ENCODE measurements at regions of chr16 and their contacts with region 1.

Region 1: DNA sequence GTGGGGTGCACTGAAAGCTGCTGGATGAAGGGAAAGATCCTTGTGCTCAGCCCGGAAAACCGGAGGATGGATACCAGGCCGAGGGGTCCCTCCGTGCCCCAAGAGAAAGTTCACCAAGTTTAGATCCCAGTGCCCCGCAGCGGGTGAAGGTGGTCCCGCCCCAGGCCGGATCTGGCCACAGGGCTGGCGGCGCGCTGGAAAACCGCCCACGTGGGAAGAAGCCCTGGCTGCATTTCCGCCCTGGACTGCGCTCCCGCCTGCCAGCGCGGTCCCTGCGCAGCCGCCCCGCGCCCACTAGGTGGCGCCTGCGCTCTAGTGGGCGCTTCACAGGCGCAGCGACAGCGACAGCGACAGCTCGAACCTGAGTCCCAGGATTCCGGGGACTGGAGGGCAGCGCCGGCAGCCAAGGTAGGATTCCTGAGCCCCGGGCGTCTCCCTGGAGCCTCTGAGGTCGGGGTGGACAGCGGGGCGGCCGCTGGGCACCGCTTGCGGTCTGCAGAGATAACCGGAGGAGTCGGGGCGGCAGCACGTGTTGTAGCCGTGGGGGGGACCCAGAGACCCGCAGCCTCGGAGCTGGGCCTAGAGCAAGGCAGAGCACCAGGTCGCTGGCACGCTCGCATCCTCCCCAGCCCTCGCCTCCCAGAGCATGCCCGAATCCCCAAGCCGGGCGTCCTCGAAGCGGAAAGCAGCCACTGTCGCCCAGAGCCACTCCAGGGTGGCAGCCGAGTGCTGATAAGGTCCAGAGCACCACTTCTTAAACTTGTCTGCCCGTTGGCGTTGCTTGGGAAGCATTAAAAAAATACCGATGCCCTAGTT is at the start of gene CHD9:
- DNase-seq: peak; percentile 91
- H3K4me3 ChIP-seq: peak within 1 kb of the TSS; percentile 77
- H3K27ac ChIP-seq: peak within 1 kb of the TSS; percentile 92
- H3K4me1 ChIP-seq: peaks cover 46% of the 10 kb centered on the region
- CTCF ChIP-seq: peak; percentile 94
- total RNA-seq, gene CHD9: 52.6 and 56.5 TPM in 2 replicates

Region 2: DNA sequence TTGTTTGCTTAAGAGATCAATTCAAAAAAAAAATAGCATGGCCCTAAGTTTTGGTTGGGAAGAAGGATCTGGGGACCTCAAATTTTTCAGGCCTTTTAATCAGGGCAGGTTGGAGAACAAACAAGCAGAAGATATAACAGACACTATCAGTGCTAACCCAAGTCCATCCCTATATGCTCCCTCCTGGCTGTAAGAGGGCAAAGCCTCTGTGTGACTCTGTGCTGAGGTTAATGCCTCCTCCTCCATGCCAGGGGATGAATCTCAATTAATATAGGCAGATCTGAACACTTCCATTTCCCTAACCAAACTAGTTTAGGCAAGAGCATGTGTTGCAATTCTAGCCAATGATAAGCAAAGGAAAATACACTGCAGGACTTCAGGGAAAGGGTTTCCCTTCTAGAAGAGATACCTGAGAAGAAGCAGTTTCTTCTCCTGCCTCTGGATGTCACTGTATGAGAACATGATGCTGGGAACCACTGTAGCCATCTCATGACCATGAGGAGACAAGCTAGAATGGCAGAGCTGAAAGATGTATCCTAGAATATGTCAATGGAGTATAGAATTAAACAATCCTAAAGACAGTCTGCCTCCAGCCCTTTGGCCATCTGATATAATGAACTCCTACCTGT is 78.2 kb before region 1 on chr16:
- CTCF ChIA-PET with region 1: no interaction called
- POLR2A ChIA-PET with region 1: no interaction called
- intact Hi-C with region 1: no loop called
- DNase-seq: peak; percentile 49
- H3K4me3 ChIP-seq: no peak overlapping the region
- H3K27ac ChIP-seq: no peak overlapping the region
- H3K4me1 ChIP-seq: no peaks in the 10 kb centered on the region
- CTCF ChIP-seq: peak; percentile 73

Region 3: GRCh38 chr16:53071748-53072301 is 16.9 kb after region 1 on chr16:
- CTCF ChIA-PET with region 1: no interaction called
- POLR2A ChIA-PET with region 1: interaction called, 31 read pairs
- intact Hi-C with region 1: no loop called
- DNase-seq: peak; percentile 84
- H3K4me3 ChIP-seq: peak overlapping the region; percentile 61
- H3K27ac ChIP-seq: peak overlapping the region; percentile 94
- H3K4me1 ChIP-seq: peaks cover 65% of the 10 kb centered on the region
- CTCF ChIP-seq: no peak

Region 4: DNA sequence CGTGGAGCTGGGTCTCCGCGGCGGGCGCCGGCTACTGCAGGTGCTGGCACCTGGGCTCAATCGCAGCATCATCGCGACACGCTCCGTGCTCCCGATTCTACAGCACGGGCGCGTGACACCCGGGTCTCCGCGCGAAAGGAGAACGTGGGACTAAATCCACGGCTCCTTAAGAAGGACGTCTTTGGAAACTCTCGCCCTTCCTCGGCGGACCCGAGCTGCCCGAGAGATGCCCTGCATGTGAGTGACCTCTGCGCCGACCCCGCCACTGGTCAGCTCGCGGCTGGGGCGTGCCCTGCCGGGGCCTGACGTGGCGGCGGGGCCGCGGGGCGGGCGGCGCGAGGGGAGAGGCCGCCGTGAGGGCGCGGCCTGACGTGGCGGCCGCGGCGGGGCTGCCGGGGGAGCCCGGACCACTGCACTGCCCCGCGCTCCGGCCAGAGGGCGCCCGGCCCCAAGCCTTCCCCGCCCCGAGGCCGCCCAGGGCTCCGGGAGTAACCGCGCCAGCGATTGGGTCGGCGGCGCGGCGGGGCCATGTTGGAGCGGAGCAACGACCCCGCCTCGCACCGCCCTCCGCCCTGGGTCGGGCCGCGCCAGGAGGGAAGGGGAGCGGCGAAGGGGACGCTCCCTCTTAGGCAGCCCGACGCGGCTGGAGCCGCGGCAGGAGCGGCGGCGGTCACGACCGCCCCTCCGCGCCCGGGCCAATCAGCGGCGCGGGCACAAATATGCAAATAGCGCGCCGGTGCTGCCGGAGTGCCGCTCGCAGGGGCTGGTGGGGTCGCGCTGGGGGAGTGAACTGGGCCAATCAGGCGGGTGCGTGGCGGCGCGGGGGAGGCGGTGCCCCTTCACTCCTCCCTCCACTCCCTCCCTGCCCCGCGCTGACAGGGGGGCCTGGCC is 75.5 kb after region 1 on chr16:
- CTCF ChIA-PET with region 1: interaction called, 3 read pairs
- POLR2A ChIA-PET with region 1: interaction called, 9 read pairs
- intact Hi-C with region 1: loop called (anchors 1 kb)
- DNase-seq: peak; percentile 94
- H3K4me3 ChIP-seq: peak overlapping the region; percentile 99
- H3K27ac ChIP-seq: peak overlapping the region; percentile 68
- H3K4me1 ChIP-seq: peaks cover 43% of the 10 kb centered on the region
- CTCF ChIP-seq: peak; percentile 54; the same call in 1 of the 2 replicates

Region 5: DNA sequence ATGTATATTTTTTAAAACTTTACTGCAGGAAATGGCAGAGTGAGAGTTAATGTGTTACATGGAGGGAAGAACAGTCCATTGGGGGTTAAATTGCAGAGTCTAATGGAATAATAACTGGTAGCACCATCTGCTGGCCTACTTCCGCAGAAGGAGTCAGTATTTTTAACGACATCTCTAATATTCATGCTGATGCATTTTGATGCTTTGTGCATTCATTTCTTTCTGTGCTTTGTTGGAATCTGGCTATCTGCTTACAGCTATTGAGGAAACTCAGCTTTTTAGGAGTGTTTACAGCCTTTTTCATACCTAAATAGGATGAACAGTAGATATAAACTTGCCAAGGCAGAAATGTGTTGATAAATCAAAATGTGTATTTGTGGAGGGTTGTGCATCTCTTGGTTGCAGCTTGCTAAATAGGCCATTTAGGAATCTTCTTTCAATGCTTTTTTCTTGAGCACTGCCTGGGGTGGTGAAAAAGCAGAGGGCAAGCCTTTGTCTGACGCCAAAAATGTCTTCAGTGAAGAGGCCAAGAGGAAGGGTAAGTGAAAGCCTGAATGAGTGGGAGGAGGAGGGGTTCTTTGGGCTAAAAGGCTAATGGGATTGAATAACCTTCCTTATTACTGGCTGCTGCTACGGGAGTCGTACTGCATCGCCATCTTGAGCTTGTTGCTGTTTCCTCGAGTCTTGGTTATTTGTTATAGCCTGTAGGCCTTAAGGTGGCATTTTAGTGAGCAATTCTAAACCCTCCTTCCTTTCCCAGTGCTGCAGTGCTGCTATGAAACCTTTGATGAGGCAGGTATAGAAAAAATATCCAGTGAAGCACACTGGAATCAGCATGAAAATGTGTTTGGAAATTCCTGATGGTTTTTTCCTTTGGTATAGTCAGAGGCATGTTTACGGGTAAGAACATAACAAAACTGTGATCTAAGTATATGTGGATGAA is 153.2 kb after region 1 on chr16:
- CTCF ChIA-PET with region 1: interaction called, 4 read pairs
- POLR2A ChIA-PET with region 1: interaction called, 12 read pairs
- intact Hi-C with region 1: loop called (anchors 1 kb)
- DNase-seq: peak; percentile 88
- H3K4me3 ChIP-seq: peak overlapping the region; percentile 88
- H3K27ac ChIP-seq: peak overlapping the region; percentile 94
- H3K4me1 ChIP-seq: peaks cover 33% of the 10 kb centered on the region
- CTCF ChIP-seq: peak; percentile 83

Region 6: GRCh38 chr16:53503270-53503923 is 448.5 kb after region 1 on chr16:
- CTCF ChIA-PET with region 1: no interaction called
- POLR2A ChIA-PET with region 1: interaction called, 9 read pairs
- intact Hi-C with region 1: loop called (anchors 5 kb)
- DNase-seq: peak; percentile 100
- H3K4me3 ChIP-seq: peak overlapping the region; percentile 82
- H3K27ac ChIP-seq: peak overlapping the region; percentile 49
- H3K4me1 ChIP-seq: peaks cover 23% of the 10 kb centered on the region
- CTCF ChIP-seq: no peak

Measured in OCI-LY7 (cell line).